ENCODE measurements at regions of chr5 and their contacts with region 1.

Region 1: DNA sequence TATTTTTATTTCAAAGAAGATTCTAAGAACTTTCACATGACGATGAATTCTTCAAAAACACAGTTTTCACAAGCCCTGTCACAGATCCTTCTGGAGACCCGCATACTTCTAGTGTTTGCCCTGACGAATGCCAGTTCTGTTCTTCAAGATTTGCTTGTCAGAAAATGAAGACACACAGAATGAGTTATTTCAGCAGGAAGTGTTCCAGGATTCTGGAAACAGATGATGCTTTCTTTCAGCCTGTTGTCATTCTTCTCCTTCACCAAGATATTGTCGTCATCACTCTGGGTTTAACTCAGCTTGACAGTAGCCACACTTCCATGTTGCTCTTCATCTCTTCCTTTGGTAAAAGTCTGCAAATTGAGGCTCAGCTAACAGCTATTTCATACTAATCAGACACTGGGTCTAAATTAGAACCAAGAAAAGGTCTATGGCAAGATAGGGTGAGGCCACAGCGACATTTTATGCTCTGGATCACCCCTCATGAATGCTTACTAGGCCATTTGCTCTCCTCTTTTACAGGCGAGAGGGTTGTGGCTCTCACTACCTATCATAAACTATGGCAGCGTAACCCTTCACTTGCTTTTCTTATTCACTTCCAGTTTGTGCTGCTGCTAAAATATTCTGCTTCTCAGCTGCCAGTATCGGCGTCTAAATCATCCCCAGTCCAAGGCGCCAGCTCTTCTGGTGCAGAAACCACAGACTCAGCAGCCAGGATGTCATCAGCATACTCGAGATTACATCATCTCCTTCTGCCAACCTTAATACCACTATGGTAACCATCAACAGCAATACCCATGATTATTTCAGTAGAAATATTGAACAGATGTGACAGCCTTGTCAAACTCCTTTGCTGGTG is 159.6 kb upstream of the TBCA start:
- DNase-seq: peak; percentile 43
- ATAC-seq: peak; percentile 68
- H3K4me3 ChIP-seq: no peak overlapping the region
- H3K4me3 Mint-ChIP-seq: peak overlapping the region; percentile 45
- H3K27ac ChIP-seq: peak overlapping the region in 1 of 2 donors; percentile 61
- H3K27ac Mint-ChIP-seq: peak overlapping the region; percentile 77
- H3K4me1 ChIP-seq: peaks cover 22% of the 10 kb centered on the region in 2 donors
- H3K4me1 Mint-ChIP-seq: peaks cover 25% of the 10 kb centered on the region
- H3K27me3 ChIP-seq: no peaks in the 10 kb centered on the region
- H3K27me3 Mint-ChIP-seq: peaks cover 9% of the 10 kb centered on the region
- CTCF ChIP-seq: no peak

Region 2: DNA sequence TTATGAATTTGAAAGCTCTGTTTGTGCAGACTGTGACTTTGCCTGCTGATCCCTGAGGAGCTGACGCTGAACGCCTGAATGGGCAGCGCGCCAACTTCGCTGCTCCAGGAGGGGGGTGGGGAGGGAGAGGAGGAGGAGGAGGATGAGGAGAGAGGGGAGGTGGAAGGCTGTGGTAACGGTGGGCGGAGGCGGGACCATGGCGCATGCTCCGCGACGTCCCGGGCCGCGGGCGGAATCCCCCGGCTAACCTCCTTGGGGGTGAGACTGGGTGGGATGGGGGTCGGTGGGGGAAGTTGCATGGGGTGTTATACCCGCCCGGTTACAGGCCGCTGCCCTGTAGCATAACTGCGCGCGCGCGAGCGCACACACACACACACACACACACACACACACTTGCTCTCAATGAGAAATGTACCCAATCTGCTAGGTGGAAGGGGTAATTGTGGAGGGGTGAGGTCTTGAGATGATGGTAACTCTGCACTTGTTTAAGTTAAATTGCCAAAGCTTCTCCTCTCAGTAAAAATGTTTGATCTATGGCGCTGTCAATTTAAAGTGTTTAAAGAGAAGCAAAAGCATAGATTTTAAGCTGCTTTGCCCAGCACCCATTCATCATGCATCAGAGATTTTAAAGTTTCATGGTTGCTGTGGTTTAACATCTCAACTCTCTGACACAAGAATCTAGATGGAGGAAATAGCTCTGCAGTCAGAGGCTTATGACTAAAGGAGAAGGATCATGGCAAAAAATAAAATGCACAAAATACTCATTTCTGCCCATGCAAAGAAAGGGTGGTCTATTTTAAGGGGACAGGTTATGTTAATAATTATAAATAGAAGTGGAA is 83.0 kb before region 1 on chr5:
- CTCF ChIA-PET with region 1: no interaction called
- POLR2A ChIA-PET with region 1: no interaction called
- intact Hi-C with region 1: loop called (anchors 10 kb)
- DNase-seq: peak; percentile 83
- ATAC-seq: peak; percentile 80
- H3K4me3 ChIP-seq: peak overlapping the region; percentile 57 to 82 (median 65)
- H3K4me3 Mint-ChIP-seq: peak overlapping the region; percentile 77
- H3K27ac ChIP-seq: peak overlapping the region; percentile 21 to 32
- H3K27ac Mint-ChIP-seq: peak overlapping the region; percentile 46
- H3K4me1 ChIP-seq: peaks cover 9 to 20% of the 10 kb centered on the region in 2 donors
- H3K4me1 Mint-ChIP-seq: peaks cover 20% of the 10 kb centered on the region
- H3K27me3 ChIP-seq: peaks cover 0 to 3% (median 0%) of the 10 kb centered on the region in 4 experiments
- H3K27me3 Mint-ChIP-seq: peaks cover 9% of the 10 kb centered on the region
- CTCF ChIP-seq: no peak

Region 3: DNA sequence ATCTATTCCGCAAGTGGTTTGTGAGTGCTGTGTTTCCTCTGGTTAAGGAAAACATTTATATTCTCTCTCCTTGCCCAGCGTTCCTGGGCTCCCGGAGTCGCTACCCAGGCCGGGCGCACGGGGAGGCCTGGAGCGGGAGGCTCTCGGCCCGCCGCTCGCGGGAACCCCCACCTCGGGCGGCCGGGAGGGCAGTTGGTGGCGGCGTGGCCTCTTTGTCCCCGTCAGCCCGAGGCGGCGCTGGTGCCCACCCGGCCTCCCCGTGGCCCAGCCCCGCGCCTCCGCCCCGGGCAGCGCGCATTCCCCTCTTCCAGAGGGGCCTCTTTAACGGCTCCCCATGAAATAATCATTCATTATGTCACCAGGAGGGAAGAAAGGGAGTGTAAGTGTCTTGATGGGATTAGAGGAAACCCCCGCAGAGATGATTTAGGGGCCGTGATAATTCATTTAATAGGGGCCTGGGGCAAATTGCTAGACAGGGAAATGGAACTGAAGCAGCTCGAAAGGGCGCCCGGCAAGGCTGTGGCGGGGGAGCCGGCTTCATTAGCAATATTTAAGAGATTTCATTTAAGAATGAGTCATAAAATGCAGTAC is 22.3 kb after region 1 on chr5:
- CTCF ChIA-PET with region 1: no interaction called
- POLR2A ChIA-PET with region 1: no interaction called
- intact Hi-C with region 1: no loop called
- DNase-seq: no peak
- ATAC-seq: no peak
- H3K4me3 ChIP-seq: peak overlapping the region in 1 of 5 experiments; percentile 25
- H3K4me3 Mint-ChIP-seq: peak overlapping the region; percentile 57
- H3K27ac ChIP-seq: no peak overlapping the region
- H3K27ac Mint-ChIP-seq: no peak overlapping the region
- H3K4me1 ChIP-seq: peaks cover 10 to 15% of the 10 kb centered on the region in 2 donors
- H3K4me1 Mint-ChIP-seq: peaks cover 12% of the 10 kb centered on the region
- H3K27me3 ChIP-seq: peaks cover 0 to 26% (median 23%) of the 10 kb centered on the region in 4 experiments
- H3K27me3 Mint-ChIP-seq: peaks cover 43% of the 10 kb centered on the region
- CTCF ChIP-seq: no peak

Region 4: GRCh38 chr5:78016863-78017529 is 81.3 kb after region 1 on chr5:
- CTCF ChIA-PET with region 1: no interaction called
- POLR2A ChIA-PET with region 1: no interaction called
- intact Hi-C with region 1: no loop called
- DNase-seq: no peak
- ATAC-seq: no peak
- H3K4me3 ChIP-seq: no peak overlapping the region
- H3K4me3 Mint-ChIP-seq: no peak overlapping the region
- H3K27ac ChIP-seq: no peak overlapping the region
- H3K27ac Mint-ChIP-seq: no peak overlapping the region
- H3K4me1 ChIP-seq: no peaks in the 10 kb centered on the region
- H3K4me1 Mint-ChIP-seq: no peaks in the 10 kb centered on the region
- H3K27me3 ChIP-seq: no peaks in the 10 kb centered on the region
- H3K27me3 Mint-ChIP-seq: no peaks in the 10 kb centered on the region
- CTCF ChIP-seq: no peak